ENCODE measurements at regions of chr5 and their contacts with region 1.

Region 1: DNA sequence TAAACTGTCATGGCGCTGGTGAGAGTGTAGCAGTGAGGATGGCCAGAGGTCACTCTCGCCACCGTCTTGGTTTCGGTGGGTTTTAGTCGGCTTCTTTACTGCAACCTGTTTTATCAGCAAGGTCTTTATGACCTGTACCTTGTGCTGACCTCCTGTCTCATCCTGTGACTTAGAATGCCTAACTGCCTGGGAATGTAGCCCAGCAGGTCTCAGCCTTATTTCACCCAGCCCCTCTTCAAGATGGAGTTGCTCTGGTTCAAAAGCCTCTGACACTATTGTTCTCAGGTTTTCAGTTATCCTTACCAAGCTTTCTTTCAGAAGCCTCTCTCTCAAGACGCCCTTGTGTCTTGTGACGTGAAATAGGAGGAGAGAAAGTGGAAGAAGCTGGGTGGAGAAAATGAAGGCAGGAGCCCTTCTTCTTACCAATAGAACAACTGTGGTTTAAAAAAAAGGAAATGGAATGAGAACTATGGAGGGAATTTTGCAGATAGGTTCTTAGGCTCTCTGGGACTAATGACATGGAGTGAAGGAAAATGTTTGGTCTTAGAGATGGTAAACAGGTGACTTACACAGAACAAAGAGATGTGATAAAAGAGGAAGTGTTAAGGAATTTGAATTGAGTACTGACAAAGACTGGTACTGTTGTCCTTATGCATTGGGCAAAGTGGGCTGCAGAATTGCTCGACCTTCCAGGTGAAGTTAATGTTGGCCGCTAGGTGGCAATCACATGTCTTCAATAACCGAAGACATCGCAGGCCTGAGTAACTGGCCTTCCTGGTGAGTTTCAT is 133.3 kb upstream of the RAI14 start:
- DNase-seq: peak; percentile 86 to 87
- H3K4me3 ChIP-seq: no peak overlapping the region
- H3K27ac ChIP-seq: peak overlapping the region; percentile 69
- H3K4me1 ChIP-seq: peaks cover 72% of the 10 kb centered on the region
- H3K27me3 ChIP-seq: no peaks in the 10 kb centered on the region
- CTCF ChIP-seq: peak; percentile 97

Region 2: DNA sequence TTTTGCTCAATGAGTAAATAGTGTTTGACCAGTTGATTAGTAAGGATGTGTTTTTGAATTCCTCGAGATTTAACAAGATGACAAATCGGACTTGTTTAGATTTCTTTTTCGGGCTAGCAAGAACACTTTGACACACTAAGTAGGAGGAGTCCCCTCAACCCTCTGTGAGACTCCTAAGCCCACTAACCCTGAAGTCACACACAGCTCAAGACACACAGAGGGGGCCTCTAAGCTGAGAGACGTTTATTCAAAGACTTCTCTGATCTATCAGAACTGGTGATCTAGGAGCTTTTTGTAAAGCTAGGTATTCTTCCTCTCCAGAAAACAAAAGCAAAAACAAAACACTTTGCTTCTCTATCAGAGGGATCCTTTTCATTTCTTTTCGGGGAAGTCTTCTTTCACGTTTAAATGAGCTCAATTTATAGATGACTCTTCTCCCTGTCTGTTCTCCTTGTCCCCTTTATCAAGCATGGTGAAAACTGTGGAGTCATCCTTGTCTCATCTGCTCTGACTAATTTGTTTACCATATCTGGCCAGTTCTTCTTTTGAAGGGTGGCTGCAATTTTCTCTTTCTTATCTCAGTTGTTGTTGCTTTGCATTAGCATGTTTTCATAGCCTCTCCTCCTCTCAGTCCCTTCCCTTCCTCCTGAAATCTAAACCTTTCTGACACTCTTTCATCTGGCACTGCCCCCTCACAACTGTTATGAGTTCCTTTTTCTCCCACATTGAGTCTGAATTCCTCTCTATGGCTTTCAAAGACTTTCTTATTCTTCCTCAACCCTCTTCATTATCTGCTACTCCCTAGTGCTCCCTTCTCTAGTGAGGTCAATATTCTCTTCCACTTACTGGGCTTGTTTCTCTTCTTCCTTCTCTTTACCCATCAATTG is 64.8 kb after region 1 on chr5:
- CTCF ChIA-PET with region 1: interaction called, 4 read pairs
- POLR2A ChIA-PET with region 1: interaction called, 6 read pairs
- intact Hi-C with region 1: loop called (anchors 1 kb)
- DNase-seq: peak in 1 of 2 experiments; percentile 86
- H3K4me3 ChIP-seq: peak overlapping the region; percentile 51
- H3K27ac ChIP-seq: peak overlapping the region; percentile 97
- H3K4me1 ChIP-seq: peaks cover 76% of the 10 kb centered on the region
- H3K27me3 ChIP-seq: no peaks in the 10 kb centered on the region
- CTCF ChIP-seq: no peak

Region 3: DNA sequence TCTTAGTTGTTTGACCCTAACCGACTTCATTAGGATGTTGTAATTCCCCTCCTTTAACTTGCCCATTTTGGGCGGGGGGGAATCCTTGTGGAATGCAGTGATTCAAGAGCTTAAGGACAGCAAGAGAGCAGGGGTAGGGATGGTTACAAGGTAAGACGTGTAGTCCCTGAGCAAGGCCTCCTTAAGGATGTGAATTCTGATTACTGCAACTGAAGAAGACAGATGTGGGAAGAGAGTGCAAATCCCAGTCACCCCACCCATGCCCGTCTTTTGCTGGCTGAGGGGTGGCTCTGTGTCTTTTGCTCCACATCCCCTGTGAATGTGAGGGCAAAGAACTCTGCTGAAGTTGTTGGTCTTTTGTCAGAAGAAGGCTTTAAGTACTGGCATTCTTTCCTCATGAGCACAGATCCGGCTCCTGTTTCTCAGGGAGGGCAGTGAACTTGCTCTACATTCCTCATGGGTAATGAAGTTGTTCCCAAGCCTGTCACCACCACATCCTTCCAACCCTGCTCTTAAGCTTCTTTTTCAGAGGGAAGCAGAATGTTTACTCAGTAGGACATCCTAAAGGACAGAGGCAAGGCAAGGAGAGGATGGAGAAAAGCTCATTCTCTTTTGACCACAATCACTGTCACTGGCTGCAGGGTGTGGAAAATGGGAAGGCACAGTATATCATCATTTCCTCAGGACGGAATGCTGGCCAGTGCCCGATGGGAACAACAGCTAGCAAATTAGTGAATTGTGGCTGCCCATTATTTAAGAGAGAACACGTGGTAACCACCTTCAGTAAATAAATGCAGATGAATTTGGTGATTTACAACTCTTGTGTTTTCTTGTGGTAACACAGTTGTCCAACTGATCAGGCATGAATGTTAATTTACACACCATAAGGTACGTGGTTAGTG is 194.9 kb after region 1 on chr5:
- CTCF ChIA-PET with region 1: interaction called, 14 read pairs
- POLR2A ChIA-PET with region 1: no interaction called
- intact Hi-C with region 1: loop called (anchors 1 kb)
- DNase-seq: peak; percentile 87 to 100
- H3K4me3 ChIP-seq: peak overlapping the region; percentile 17; the same call in 1 of the 2 replicates
- H3K27ac ChIP-seq: peak overlapping the region; percentile 97
- H3K4me1 ChIP-seq: peaks cover 60% of the 10 kb centered on the region
- H3K27me3 ChIP-seq: no peaks in the 10 kb centered on the region
- CTCF ChIP-seq: no peak

Region 4: DNA sequence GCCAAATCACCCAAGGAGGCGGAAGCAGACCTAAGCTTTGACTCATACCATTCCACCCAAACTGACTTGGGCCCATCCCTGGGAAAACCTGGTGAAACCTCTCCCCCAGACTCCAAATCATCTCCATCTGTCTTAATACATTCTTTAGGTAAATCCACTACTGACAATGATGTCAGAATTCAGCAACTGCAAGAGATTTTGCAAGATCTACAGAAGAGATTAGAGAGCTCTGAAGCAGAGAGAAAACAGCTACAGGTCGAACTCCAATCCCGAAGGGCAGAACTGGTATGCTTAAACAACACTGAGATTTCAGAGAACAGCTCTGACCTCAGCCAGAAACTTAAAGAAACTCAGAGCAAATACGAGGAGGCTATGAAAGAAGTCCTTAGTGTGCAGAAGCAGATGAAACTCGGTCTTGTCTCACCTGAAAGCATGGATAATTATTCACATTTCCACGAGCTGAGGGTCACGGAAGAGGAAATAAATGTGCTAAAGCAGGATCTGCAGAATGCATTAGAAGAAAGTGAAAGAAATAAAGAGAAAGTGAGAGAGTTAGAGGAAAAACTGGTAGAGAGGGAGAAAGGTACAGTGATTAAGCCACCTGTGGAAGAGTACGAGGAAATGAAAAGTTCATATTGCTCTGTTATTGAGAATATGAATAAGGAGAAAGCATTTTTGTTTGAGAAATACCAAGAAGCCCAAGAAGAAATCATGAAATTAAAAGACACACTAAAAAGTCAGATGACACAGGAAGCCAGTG is 300.3 kb after region 1 on chr5:
- CTCF ChIA-PET with region 1: no interaction called
- POLR2A ChIA-PET with region 1: no interaction called
- intact Hi-C with region 1: loop called (anchors 5 kb)
- DNase-seq: no peak
- H3K4me3 ChIP-seq: no peak overlapping the region
- H3K27ac ChIP-seq: no peak overlapping the region
- H3K4me1 ChIP-seq: no peaks in the 10 kb centered on the region
- H3K27me3 ChIP-seq: no peaks in the 10 kb centered on the region
- CTCF ChIP-seq: no peak

Region 5: GRCh38 chr5:34898258-34898895 is 375.6 kb after region 1 on chr5:
- CTCF ChIA-PET with region 1: interaction called, 3 read pairs
- POLR2A ChIA-PET with region 1: no interaction called
- intact Hi-C with region 1: loop called (anchors 1 kb)
- DNase-seq: peak; percentile 71 to 84
- H3K4me3 ChIP-seq: no peak overlapping the region
- H3K27ac ChIP-seq: no peak overlapping the region
- H3K4me1 ChIP-seq: peaks cover 17% of the 10 kb centered on the region
- H3K27me3 ChIP-seq: no peaks in the 10 kb centered on the region
- CTCF ChIP-seq: peak; percentile 98

Region 6: DNA sequence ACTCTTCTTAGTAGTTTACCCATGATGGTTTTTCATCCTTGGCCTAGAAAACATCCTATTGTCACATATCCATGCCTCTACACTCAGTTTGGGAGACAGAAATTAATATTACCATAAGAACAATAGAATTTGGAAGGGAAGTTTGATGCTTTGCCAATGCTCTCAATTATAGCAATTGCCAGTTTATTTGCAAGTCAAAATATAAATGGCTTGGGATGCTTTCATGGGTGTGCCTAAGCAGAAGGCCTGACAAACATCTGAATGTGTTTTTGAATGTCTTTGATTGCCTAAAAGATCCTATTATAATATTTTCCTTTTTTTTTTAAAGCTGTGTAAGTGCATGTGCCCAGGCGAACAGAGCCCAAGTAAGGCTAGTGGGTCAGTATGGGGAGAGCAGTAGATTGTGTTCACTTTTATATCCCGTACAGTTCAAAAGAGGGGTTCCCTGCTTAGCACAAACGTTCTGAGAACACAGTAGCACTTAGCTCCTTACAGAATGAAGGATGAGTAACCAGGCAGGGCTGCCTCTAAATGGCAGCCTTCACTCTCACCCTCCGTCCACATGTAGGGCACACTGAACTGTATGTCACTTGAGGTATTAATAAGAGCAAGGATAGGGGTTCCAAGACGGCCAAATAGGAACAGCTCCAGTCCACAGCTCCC is 581.0 kb after region 1 on chr5:
- CTCF ChIA-PET with region 1: no interaction called
- POLR2A ChIA-PET with region 1: no interaction called
- intact Hi-C with region 1: no loop called
- DNase-seq: no peak
- H3K4me3 ChIP-seq: no peak overlapping the region
- H3K27ac ChIP-seq: no peak overlapping the region
- H3K4me1 ChIP-seq: no peaks in the 10 kb centered on the region
- H3K27me3 ChIP-seq: peaks cover 63% of the 10 kb centered on the region
- CTCF ChIP-seq: no peak